Sigmoid colon (tissue), 7 donors: ENCODE measurements at regions of chr15 and their contacts with region 1.

Region 1: DNA sequence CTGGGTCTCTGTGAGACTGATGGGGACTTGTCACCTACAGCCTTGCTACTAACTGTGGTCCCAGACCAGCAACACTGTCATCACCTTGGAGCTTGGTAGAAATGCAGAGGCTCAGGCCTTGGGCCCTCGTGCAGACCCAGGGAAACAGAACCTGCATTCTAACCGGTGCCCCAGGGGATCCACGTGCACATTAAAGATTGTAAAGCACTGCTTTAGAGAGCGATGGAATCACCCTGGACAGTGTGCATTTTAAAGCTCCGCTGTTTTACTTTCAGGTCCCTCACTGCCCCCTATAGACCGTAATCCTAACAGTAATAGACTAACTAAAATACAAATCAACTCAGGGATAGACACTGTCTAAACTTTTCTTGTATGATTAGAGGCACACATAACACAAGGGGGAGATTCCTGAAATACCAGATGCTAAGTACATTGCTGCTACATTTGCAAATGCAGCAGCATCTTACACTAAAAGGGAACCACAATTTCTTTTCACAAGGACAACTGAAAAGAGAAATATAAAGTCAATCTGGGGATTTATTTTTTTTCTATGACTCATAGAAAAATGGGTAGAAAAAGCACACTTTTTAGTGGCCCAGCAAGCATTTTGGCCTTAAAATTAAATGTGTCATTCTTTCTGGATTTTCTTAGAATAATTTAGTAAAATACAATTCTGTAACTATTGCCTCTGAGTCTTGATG is 10.5 kb upstream of the SH3GL3 start:
- DNase-seq: no peak
- H3K4me3 ChIP-seq: no peak overlapping the region
- H3K27ac ChIP-seq: no peak overlapping the region
- H3K4me1 ChIP-seq: peaks cover 0 to 18% (median 2%) of the 10 kb centered on the region in 4 donors
- H3K27me3 ChIP-seq: no peaks in the 10 kb centered on the region
- CTCF ChIP-seq: peak in 2 of 4 experiments; percentile 24 to 37
- EP300 ChIP-seq: no peak
- POLR2A ChIP-seq: no peak

Region 2: DNA sequence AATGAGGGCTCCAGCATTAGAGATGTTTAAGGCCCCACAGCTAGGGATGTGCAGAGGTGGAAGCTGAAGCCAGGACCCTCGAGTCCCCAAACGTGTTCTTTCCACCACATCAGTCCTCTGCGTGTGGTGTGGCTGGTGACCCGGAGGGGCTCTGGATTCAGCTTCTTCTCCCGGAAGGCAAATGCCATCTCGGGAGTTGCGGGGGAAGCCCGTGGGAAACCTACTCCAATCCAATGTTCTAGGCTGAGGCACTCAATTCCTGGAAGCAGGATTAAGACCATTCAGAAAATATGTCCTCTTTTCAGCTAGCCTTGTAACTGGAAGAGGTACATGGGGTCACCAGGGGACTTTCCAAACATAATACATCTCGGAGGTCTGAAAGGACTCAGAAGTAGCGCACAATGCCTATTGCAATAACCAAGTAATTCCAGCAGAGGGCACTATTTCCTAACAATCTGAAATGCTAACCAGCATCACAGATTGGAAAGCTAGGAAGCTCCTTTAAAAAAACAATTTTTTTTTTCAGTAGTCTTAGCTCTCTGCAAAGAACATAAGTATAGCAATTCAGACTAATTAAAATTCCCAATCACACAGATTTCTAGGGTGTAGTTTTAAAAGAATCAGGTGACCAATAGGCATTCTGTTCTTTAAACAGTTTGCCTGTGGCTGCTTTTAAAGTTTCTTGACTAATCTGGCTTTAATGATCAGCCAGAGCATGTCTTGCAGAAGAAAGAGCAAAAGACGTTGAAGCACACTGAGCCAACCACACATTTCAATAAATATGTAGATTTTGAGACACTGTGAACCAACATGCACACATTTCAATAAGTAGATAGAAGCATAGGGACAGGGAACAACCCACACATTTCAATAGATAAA is 188.2 kb before region 1 on chr15:
- intact Hi-C with region 1: loop called (anchors 1 kb)
- DNase-seq: no peak
- H3K4me3 ChIP-seq: no peak overlapping the region
- H3K27ac ChIP-seq: no peak overlapping the region
- H3K4me1 ChIP-seq: peaks cover 0 to 3% (median under 1%) of the 10 kb centered on the region in 4 donors
- H3K27me3 ChIP-seq: peaks cover 0 to 22% (median 7%) of the 10 kb centered on the region in 3 donors
- CTCF ChIP-seq: peak; percentile 57 to 93 (median 80)
- EP300 ChIP-seq: no peak
- POLR2A ChIP-seq: no peak

Region 3: GRCh38 chr15:83559310-83559966 is 122.8 kb after region 1 on chr15:
- intact Hi-C with region 1: loop called (anchors 1 kb)
- DNase-seq: peak; percentile 78
- H3K4me3 ChIP-seq: no peak overlapping the region
- H3K27ac ChIP-seq: no peak overlapping the region
- H3K4me1 ChIP-seq: no peaks in the 10 kb centered on the region
- H3K27me3 ChIP-seq: no peaks in the 10 kb centered on the region
- CTCF ChIP-seq: peak; percentile 54 to 83 (median 74)
- EP300 ChIP-seq: no peak
- POLR2A ChIP-seq: no peak

Region 4: DNA sequence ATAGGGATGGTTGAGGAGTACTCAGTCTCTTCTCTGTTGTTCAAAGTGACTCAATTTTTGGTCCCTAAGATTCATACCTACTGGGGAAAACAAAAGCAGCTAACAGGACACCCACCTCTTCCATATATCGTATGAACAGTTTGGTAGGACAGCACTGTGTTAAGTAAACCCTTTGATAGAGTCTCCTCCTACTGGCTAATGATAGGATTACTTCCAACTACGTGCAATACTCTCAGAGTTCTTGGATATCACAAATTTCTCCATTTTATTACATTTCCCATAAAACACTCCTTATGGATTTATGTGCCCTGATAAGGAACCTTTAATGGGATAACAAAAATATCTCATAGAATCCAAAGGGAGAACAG is 598.8 kb after region 1 on chr15:
- intact Hi-C with region 1: loop called (anchors 5 kb)
- DNase-seq: no peak
- H3K4me3 ChIP-seq: no peak overlapping the region
- H3K27ac ChIP-seq: no peak overlapping the region
- H3K4me1 ChIP-seq: peaks cover 0 to 6% (median 2%) of the 10 kb centered on the region in 4 donors
- H3K27me3 ChIP-seq: no peaks in the 10 kb centered on the region
- CTCF ChIP-seq: peak; percentile 6 to 49 (median 26)
- EP300 ChIP-seq: no peak
- POLR2A ChIP-seq: no peak